ENCODE measurements at regions of chr1 and their contacts with region 1.

Region 1: DNA sequence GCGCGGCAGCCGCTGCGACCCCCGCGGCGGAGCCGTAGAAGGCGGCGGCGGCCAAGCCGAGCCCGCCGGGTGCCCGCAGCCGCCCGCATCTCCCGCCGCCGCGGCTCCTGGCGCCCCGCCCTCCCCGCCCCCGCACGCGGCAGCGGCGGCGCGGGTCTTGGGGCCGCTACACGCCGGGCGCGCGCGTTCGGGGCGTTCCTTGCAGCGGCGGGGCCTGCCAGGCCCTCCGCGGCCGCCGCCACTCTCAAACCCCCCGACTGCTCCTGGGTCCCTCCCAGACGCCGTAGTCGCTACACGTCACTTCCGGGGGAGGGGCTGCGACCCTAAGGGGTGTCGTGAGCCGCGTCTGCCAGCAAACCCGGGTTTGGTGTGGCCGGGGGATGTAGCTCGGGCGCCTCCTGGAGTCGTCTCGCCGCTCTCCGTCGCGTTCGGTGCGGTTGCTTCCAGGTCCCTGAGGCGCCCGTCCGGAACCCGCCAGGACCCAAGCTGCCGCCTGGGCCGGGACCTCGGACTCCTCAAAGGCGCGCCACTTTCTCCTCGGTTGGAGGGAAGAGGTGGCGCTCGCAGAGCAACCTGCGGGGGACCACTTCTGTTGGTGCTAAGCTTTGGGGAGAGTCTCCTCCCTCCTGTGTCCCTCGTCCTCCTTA is at the start of gene ELK4:
- DNase-seq: peak; percentile 96
- ATAC-seq: peak; percentile 87
- H3K4me3 ChIP-seq: peak within 1 kb of the TSS; percentile 65 to 88
- H3K27ac ChIP-seq: peak within 1 kb of the TSS; percentile 96
- H3K4me1 ChIP-seq: peaks cover 14 to 16% of the 10 kb centered on the region in 2 experiments; a peak in 3 of 4 replicates
- H3K27me3 ChIP-seq: no peaks in the 10 kb centered on the region
- CTCF ChIP-seq: peak; percentile 54 to 72 (median 56); a peak in 5 of 6 replicates
- POLR2A ChIP-seq: peak; percentile 64
- RAD21 ChIP-seq: peak; percentile 78
- total RNA-seq, gene ELK4: 46.2 TPM

Region 2: DNA sequence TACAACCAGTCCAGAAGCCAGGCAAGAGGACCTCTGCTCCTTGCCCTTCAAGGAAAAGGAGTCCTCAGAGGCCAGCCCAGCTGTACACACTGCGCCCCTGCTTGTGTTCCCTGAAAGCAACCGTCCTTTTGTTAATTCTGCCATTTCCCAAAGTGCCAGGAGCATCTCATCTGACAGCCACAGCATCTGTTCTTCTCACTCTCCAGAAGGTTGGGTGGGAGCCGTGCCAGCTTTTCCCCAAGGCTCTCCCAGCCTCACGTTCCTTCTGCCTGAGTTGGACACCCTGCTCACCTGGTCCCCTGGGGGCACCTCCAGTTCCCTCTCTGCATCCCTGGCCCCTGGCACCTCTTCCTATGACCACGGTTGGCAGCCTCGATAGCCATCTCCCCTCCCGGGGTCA is 599.3 kb before region 1 on chr1:
- CTCF ChIA-PET with region 1: no interaction called
- POLR2A ChIA-PET with region 1: no interaction called
- RAD21 ChIA-PET with region 1: no interaction called
- intact Hi-C with region 1: no loop called
- DNase-seq: no peak
- ATAC-seq: no peak
- H3K4me3 ChIP-seq: no peak overlapping the region
- H3K27ac ChIP-seq: no peak overlapping the region
- H3K4me1 ChIP-seq: no peaks in the 10 kb centered on the region
- H3K27me3 ChIP-seq: no peaks in the 10 kb centered on the region
- CTCF ChIP-seq: no peak
- POLR2A ChIP-seq: no peak
- RAD21 ChIP-seq: no peak

Region 3: DNA sequence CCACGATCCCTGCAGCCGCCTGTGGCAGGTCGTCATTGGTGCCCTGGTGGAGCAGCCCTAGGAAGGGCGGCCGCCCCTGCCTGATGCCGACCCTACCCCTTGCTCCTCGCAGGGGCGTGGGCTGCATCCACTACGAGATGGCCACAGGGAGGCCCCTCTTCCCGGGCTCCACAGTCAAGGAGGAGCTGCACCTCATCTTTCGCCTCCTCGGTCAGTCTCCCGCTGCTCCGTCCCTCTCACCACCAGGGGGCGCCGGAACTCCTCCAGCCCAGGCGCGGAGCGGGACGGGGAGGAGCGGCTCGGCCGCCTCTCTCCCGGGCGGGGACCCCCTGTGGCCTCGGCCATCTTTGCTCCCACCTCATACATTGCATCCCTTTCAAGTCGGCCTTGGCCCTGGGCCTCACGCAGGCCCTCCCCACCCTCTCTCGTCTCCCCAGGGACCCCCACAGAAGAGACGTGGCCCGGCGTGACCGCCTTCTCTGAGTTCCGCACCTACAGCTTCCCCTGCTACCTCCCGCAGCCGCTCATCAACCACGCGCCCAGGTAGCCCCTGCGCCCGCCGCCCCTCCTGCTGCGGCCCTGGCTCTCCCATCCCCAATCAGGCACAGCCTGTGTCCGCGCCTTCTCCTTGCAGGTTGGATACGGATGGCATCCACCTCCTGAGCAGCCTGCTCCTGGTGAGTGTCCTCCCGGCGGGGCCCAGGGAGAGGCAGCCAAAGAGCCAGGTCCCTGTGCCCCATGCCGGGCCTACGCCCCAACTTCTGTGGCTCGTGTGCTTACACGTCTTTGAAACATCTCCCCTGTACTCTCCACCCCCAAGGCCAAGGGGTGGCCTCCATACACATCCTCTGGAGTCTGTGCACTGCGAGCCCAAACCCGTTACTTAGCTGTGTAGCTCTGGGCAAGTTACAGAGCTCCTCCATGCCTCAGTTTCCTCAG is 102.7 kb before region 1 on chr1:
- CTCF ChIA-PET with region 1: interaction called, 9 read pairs
- POLR2A ChIA-PET with region 1: no interaction called
- RAD21 ChIA-PET with region 1: no interaction called
- intact Hi-C with region 1: loop called (anchors 2 kb)
- DNase-seq: peak; percentile 19
- ATAC-seq: peak; percentile 90
- H3K4me3 ChIP-seq: no peak overlapping the region
- H3K27ac ChIP-seq: no peak overlapping the region
- H3K4me1 ChIP-seq: peaks cover 0 to 4% of the 10 kb centered on the region in 2 experiments; a peak in 1 of 4 replicates
- H3K27me3 ChIP-seq: no peaks in the 10 kb centered on the region
- CTCF ChIP-seq: peak; percentile 74 to 89 (median 86)
- POLR2A ChIP-seq: no peak
- RAD21 ChIP-seq: peak; percentile 83

Region 4: DNA sequence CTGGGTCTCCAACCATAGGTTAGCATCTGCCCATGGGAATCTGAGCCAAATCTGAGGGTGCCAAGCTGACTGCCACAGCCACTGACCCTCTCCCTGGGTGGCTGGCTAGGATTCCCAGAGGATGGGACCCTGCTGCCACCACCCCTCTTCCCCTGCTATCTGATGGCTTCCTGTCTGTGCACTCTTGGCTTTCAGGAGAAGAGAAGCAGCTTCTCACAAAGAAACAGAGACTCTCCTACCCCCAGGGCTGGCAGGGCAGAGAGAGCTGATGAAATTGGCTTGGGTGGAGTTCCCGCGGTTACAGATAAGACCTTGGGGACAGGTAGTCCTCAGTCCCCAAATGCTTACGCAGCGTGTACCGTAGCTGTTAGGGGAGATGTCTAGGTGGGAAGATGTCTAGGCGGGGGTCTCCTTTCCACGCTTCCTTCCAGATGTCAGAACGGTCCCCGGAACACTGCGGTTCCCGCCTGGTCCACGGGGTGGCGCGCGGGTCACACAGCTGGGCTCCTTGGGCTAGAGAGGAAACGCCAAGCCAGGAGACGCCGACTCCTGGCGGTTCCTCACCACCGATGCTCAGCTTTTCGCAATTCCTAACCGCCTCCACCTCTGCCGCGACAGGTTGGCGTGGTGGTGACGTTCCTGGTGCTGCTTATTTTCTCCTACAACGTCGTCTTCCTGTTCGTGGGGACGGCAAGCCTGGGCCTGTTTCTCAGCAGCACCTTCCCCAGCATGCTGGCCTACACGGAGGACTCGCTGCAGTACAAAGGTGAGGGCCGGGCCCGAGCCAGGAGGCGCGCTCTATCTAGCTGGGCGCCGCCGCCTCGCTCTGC is 40.1 kb before region 1 on chr1:
- CTCF ChIA-PET with region 1: interaction called, 21 read pairs
- POLR2A ChIA-PET with region 1: interaction called, 4 read pairs
- RAD21 ChIA-PET with region 1: interaction called in 1 of 2 experiments, 4 read pairs
- intact Hi-C with region 1: loop called (anchors 1 kb)
- DNase-seq: peak; percentile 65
- ATAC-seq: peak; percentile 89
- H3K4me3 ChIP-seq: peak overlapping the region; percentile 37 to 53
- H3K27ac ChIP-seq: peak overlapping the region; percentile 14; the same call in 1 of the 2 replicates
- H3K4me1 ChIP-seq: peaks cover 0 to 11% of the 10 kb centered on the region in 2 experiments; a peak in 2 of 4 replicates
- H3K27me3 ChIP-seq: no peaks in the 10 kb centered on the region
- CTCF ChIP-seq: peak; percentile 97 to 98 (median 98)
- POLR2A ChIP-seq: no peak
- RAD21 ChIP-seq: peak; percentile 99

Measured in HCT116 (cell line).